Sciatic nerve (tissue), 2 donors: ENCODE measurements at regions of chr11 and their contacts with region 1.

Region 1: DNA sequence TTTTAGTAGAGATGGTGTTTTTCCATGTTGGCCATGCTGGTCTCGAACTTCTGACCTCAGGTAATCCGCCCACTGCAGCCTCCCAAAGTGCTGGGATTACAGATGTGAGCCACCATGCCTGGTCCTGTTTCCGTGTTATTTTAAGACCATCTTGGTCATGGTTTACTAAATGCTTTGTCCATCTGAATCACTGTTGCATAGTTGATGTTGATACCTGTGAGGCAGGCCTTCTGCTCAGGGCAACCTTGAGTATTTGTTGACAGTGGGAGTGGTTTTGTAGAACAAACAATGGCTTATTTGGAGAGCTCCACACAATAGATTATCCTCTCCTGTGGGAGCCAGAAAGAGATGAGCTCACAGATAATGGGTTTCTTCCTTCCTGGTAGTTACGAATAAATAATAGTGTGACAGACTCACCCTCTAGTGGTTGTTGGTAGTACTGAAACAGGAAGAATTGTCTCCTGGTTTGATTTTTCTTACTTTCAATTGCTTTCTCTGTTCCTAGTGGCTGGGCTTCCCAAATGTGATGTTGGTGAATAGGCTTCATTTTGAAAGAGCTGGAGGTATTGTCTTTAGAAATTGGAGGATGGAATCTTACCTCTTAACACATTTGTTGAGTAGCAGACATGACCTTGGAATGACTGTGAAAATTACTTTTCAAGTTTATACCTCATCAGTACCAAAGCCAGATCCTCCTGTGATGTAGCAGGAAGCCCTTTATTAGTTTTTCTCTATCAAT is 39.0 kb downstream of the CTNND1 start:
- DNase-seq: no peak
- ATAC-seq: peak; percentile 89

Region 2: DNA sequence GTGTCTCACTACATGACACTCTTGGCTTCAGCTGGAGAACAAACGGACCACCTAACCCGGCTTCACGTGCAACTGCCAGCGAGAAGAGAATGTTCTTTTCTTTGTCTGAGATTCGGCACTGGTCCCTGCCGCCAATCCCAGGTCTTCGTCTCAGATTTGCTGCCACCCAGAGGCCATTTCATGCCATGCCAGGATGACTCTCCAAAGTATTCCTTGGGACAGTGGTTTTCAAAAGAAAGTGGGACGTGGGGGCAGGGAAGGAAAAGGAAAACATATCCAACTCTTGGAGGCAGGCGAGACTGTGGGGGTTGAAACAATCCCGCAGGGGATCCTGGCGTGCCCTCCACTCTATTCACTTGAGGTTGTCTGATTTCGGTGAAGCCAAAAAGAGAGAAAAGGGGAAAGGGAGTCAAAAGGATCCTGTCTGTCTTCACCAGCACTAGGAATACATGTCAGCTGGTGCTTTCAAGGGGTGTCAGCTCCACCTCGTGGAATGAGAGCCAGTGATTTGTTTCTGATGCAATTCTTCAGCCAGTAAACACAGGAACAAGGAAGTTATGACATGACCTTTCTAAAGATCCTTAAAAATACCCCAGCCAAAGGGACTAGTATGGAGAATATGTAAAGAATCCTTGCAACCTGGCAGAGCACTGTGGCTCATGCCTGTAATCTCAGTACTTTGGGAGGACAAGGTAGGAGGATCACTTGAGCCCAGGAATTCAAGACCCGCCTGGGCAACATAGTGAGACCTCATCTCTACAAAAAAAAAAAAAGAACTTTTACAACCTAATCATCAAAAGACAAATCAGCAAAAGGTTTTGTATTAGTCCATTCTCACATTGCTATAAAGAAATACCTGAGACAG is 522.5 kb before region 1 on chr11:
- intact Hi-C with region 1: no loop called
- DNase-seq: peak; percentile 82
- ATAC-seq: peak; percentile 91

Region 3: GRCh38 chr11:57630193-57630592 is 170.4 kb before region 1 on chr11:
- intact Hi-C with region 1: no loop called
- DNase-seq: no peak
- ATAC-seq: no peak

Region 4: GRCh38 chr11:57667736-57668435 is 132.7 kb before region 1 on chr11 and contains the start of gene ZDHHC5:
- intact Hi-C with region 1: loop called (anchors 10 kb)
- DNase-seq: peak; percentile 99
- ATAC-seq: peak; percentile 98
- total RNA-seq, gene ZDHHC5: 45.4 TPM

Region 5: DNA sequence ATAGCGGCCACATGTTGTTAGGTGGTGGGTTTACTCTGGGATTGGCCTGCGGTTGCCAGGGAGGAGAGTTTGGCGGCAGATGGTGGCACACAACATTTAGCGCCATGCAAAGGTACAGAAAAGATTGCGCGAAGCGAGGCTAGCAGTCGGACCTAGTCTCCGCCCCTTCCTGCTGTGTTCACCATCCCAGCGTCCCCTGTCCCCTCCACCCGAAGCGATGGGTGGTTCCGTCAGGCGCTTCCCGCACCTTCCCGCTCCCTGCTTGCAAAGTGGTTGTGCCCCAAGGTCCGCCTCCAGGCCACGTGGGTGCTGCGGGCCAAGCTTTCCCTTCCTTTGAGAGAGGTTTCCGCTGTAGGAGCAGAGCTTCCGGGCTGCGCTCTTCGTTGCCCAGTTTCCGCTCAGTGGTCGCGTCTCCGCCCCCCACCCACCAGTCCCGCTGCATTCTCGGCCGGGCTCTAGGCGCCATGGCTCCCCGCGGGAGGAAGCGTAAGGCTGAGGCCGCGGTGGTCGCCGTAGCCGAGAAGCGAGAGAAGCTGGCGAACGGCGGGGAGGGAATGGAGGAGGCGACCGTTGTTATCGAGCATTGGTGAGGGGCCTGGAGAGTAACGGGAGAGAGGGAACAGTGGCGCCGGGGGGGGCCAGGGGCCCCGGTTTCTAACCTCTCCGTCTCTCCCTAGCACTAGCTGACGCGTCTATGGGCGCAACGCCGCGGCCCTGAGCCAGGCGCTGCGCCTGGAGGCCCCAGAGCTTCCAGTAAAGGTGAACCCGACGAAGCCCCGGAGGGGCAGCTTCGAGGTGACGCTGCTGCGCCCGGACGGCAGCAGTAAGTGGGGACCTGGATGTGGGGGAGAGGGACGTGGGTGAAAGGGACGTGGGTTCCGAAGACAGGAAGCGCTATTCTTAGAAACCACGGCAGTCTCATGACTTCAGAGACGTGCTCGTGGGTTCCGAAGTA is 59.2 kb before region 1 on chr11 and contains the start of gene SELENOH:
- intact Hi-C with region 1: loop called (anchors 10 kb)
- DNase-seq: peak; percentile 96
- ATAC-seq: peak; percentile 99
- total RNA-seq, gene SELENOH: 77.5 TPM

Region 6: DNA sequence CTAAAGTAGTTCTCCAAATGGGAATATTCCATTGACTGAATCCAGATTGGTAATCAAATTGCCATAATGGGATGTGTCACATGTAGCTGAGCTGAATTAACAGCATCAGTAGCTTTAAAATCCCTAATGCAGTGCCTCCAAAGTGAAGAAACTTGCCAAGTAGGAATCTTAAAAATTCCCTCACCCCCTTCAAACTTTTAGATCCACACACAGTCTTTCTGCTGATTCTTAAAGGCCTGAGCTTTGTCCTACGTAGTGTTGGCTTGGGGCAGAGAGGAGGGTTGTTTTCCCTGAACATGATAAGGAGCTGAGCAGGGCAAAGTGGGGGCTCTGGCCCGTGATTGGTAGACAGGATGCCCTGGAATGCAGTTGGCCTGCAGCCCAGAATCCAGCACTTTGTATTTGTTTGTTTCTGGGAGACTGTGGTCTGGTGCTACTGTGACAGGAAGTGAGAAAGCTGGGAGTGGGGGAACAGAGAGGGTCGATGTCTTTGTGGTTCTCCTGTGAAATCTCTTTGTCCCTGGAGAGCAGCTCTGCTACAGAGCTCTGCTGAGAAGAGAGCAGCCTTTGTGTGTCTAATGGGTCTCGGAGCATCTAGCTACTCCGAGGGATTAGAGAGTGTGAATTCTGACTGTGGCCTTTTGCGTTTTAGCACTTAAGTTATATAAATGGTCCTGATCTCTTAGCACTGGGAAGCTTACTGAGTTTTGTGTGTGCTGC is 22.1 kb before region 1 on chr11:
- intact Hi-C with region 1: no loop called
- DNase-seq: peak; percentile 91
- ATAC-seq: peak; percentile 94

Region 7: DNA sequence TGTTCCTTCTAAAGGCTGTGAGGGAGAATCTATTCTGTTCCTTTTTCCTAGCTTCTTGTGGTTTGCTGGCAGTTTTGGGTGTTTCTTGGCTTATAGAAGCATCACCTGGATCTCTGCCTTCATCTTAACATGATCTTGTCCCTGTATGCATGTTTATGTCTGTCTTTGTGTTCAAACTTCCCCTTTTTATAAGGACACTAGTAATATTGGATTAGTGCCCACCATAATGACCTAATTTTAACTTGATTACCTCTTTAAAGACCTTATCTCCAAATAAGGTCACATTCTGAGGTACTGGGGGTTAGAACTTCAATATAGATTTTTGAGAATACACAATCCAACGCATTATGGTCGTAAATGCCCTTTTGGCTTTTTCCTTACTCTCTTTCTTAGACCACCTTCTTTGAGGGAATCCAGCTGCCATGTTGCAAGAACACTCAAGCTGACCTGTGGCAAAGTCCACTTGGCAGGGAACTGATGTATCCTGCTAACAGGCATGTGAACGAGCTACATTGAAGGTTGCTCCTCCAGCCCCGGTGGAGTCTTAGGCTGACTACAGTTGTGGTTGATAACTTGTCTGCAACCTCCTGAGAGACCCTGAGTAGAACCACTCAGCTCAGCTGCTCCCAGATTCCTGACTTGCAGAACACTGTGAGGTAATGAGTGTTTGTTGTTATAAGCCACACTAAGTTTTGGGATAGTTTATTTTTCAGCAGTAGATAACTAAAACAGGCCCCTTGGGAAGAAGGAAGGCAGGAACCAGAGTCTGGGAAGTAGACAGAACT is 95.9 kb after region 1 on chr11:
- intact Hi-C with region 1: no loop called
- DNase-seq: no peak
- ATAC-seq: no peak